Adrenal gland (tissue), 19 donors: ENCODE measurements at regions of chr16 and their contacts with region 1.

Region 1: GRCh38 chr16:49592546-49593423 is 219.2 kb downstream of the C16orf78 start:
- DNase-seq: peak in 5 of 7 donors; percentile 15 to 55 (median 30)
- H3K4me3 ChIP-seq: no peak overlapping the region
- H3K27ac ChIP-seq: no peak overlapping the region
- H3K4me1 ChIP-seq: no peaks in the 10 kb centered on the region
- H3K27me3 ChIP-seq: no peaks in the 10 kb centered on the region
- CTCF ChIP-seq: peak; percentile 52 to 64 (median 62)
- POLR2A ChIP-seq: no peak

Region 2: GRCh38 chr16:49407873-49408550 is 184.8 kb before region 1 on chr16:
- intact Hi-C with region 1: loop called in 1 of 2 experiments (anchors 5 kb)
- DNase-seq: peak; percentile 82 to 92 (median 88)
- H3K4me3 ChIP-seq: no peak overlapping the region
- H3K27ac ChIP-seq: no peak overlapping the region
- H3K4me1 ChIP-seq: no peaks in the 10 kb centered on the region
- H3K27me3 ChIP-seq: no peaks in the 10 kb centered on the region
- CTCF ChIP-seq: peak; percentile 85 to 96 (median 93)
- POLR2A ChIP-seq: no peak

Region 3: GRCh38 chr16:49513040-49513439 is 79.7 kb before region 1 on chr16:
- intact Hi-C with region 1: no loop called
- DNase-seq: peak in 1 of 7 donors; percentile 58
- H3K4me3 ChIP-seq: no peak overlapping the region
- H3K27ac ChIP-seq: no peak overlapping the region
- H3K4me1 ChIP-seq: no peaks in the 10 kb centered on the region
- H3K27me3 ChIP-seq: no peaks in the 10 kb centered on the region
- CTCF ChIP-seq: peak in 1 of 6 experiments; percentile 17
- POLR2A ChIP-seq: no peak

Region 4: DNA sequence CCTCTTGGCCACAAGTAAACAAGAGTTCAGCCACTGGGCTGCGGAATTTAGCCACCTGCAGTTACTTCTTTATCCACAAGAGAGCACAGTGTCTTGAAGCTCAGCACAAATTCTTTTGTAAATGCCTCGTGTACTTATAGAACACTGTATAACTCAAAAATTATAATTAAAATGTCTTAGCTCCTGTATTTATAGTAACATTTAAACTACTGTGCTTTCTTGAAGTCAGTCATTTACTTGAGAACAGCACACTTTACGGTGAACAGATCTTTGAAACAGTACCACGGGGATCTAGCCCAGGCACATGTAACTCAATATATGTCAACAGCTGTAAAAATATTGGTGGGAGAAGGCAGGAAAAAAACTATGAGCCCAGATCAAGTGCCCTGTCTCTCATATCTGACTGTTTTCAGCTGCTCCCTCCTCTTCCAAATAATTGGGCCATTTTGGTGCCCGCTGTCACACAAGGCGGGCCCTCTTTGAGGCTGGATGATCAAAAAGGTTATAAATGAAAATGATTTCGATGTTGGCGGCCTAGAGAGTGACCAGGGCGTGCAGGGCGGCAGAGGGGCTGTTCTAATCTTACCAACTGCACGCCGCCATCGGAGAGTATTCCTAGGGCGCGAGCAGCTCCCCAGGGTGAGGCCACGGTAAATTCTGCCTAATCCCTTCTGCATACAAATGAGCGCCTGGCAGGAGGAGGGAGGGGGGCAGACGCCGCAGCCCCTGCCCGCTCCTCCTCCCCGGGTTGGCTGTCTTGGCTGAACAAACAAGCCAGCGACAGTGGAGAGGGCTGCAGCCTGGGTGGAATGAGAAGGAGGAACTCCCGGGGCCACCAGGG is 36.0 kb before region 1 on chr16:
- intact Hi-C with region 1: no loop called
- DNase-seq: no peak
- H3K4me3 ChIP-seq: no peak overlapping the region
- H3K27ac ChIP-seq: no peak overlapping the region
- H3K4me1 ChIP-seq: no peaks in the 10 kb centered on the region
- H3K27me3 ChIP-seq: no peaks in the 10 kb centered on the region
- CTCF ChIP-seq: peak in 4 of 6 experiments; percentile 32 to 53 (median 39)
- POLR2A ChIP-seq: no peak